ENCODE measurements at regions of chr19 and their contacts with region 1.

Region 1: DNA sequence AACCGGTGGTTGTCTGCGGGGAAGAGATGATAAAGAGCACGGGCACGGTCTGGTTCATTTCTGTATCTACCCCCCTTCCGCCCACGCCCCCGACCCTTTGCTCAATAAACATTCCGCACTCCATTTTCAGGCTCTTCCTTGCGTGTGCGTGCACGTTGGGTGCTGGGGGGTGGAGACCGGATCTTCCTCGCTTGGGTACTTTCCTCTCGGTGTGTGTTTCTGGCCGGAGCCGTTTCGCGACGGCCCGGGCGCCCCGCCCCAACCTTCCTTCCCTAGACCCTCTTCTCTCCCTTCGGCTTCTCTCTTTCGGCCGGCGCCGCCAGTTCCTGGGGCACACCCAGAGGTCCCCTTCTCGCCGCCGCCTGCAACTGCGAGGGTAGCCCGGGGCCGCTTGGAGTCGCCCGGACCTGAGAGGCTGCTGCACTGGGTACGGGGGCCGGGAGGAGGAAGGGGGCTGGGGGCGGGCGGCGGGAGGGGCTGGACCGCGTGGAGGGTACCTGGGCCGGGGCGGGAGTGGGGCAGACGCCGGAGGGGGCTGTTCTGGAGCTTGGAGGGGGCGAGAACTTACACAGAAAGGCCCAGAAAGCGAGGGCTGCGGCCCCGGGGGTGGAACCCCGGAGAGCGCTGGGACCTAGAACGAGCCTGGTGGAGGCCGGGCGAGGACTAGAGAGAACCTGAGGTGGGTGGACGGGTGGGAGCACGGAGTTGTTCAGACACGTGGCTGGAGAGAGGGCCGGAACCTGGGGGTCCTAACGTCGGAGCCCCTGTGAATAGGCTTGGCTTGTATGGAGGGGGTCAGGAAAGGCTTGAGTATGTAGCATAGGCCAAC is at the start of gene ZNF581:
- DNase-seq: peak; percentile 78
- H3K4me3 Mint-ChIP-seq: peak within 1 kb of the TSS; percentile 93
- H3K27ac Mint-ChIP-seq: peak within 1 kb of the TSS; percentile 98
- H3K4me1 Mint-ChIP-seq: peaks cover 54% of the 10 kb centered on the region
- H3K27me3 Mint-ChIP-seq: no peaks in the 10 kb centered on the region
- total RNA-seq, gene ZNF581: 24.1 to 25.5 TPM

Region 2: GRCh38 chr19:55624109-55625003 is 19.2 kb before region 1 on chr19 and contains the start of gene ZNF784:
- CTCF ChIA-PET with region 1: interaction called, 10 read pairs
- POLR2A ChIA-PET with region 1: no interaction called
- DNase-seq: peak; percentile 92
- H3K4me3 Mint-ChIP-seq: peak within 1 kb of the TSS; percentile 91
- H3K27ac Mint-ChIP-seq: peak within 1 kb of the TSS; percentile 99
- H3K4me1 Mint-ChIP-seq: peaks cover 55% of the 10 kb centered on the region
- H3K27me3 Mint-ChIP-seq: peaks cover 12% of the 10 kb centered on the region
- total RNA-seq, gene ZNF784: 4.3 to 5.8 TPM

Region 3: GRCh38 chr19:55653758-55654539 is 10.4 kb after region 1 on chr19:
- CTCF ChIA-PET with region 1: interaction called, 17 read pairs
- POLR2A ChIA-PET with region 1: no interaction called
- DNase-seq: peak; percentile 100
- H3K4me3 Mint-ChIP-seq: peak overlapping the region; percentile 88
- H3K27ac Mint-ChIP-seq: peak overlapping the region; percentile 99
- H3K4me1 Mint-ChIP-seq: peaks cover 44% of the 10 kb centered on the region
- H3K27me3 Mint-ChIP-seq: no peaks in the 10 kb centered on the region

Measured in activated CD4-positive, alpha-beta T cell treated with anti-CD3 and anti-CD28 coated beads, Interleukin-2, amount 10 ng/mL, durations not matched to agents 7 days and 5 days (primary cell).